ENCODE measurements at regions of chr3 and their contacts with region 1.

Region 1: DNA sequence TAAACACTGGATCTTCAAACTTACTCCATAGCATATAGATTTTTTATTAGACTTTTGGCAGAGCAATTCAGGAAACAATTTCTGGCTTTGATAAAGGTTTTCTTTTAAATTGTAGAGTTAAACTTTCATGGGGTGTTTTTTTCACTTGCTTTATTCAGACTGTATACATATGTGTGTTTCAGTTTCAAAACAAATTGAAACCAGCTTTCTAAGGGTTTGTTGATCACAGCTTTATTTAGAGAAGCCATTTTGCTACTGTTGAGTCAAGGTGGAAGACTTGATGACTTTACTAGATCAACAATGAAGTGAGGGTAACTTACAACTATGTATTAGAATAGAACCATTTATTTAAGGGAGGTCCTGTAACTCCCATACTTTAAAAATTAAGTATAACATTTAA is 6.2 kb downstream of the UBE2E1 start:
- DNase-seq: no peak
- H3K4me3 Mint-ChIP-seq: peak overlapping the region; percentile 87
- H3K27ac Mint-ChIP-seq: peak overlapping the region; percentile 96
- H3K4me1 Mint-ChIP-seq: peaks cover 70% of the 10 kb centered on the region
- H3K27me3 Mint-ChIP-seq: peaks cover 3% of the 10 kb centered on the region

Region 2: GRCh38 chr3:23826382-23827064 is 14.6 kb after region 1 on chr3:
- intact Hi-C with region 1: loop called (anchors 2 kb)
- DNase-seq: no peak
- H3K4me3 Mint-ChIP-seq: no peak overlapping the region
- H3K27ac Mint-ChIP-seq: no peak overlapping the region
- H3K4me1 Mint-ChIP-seq: peaks cover 35% of the 10 kb centered on the region
- H3K27me3 Mint-ChIP-seq: no peaks in the 10 kb centered on the region